A673 (cell line): ENCODE measurements at regions of chrX and their contacts with region 1.

Region 1: GRCh38 chrX:36867143-36867542 is 141.0 kb upstream of the FAM47C start:
- DNase-seq: peak; percentile 82
- H3K4me3 ChIP-seq: no peak overlapping the region
- H3K27ac ChIP-seq: peak overlapping the region; percentile 24
- H3K4me1 ChIP-seq: peaks cover 29% of the 10 kb centered on the region
- H3K27me3 ChIP-seq: no peaks in the 10 kb centered on the region
- CTCF ChIP-seq: peak; percentile 70

Region 2: DNA sequence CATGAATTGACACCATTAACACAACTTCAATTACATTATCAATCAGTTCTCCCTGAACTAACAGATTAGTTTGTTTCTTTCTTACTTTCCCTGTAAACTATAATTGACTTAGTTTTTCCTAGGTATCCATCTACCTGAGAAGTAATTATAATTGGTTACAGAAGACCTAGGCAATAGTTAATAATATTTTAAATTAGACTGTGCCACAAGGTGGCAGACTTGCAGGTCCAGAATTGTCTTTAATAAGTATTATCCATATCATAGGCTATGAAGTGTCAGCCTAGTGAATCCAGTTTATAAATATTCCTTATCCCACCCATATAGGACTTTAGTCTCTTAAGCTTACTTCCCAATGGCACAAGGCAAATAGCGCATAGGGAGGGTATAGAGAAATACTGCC is 1973.4 kb before region 1 on chrX:
- CTCF ChIA-PET with region 1: no interaction called
- POLR2A ChIA-PET with region 1: no interaction called
- intact Hi-C with region 1: loop called (anchors 10 kb)
- DNase-seq: peak; percentile 36
- H3K4me3 ChIP-seq: no peak overlapping the region
- H3K27ac ChIP-seq: no peak overlapping the region
- H3K4me1 ChIP-seq: no peaks in the 10 kb centered on the region
- H3K27me3 ChIP-seq: no peaks in the 10 kb centered on the region
- CTCF ChIP-seq: peak; percentile 66

Region 3: GRCh38 chrX:35380808-35381700 is 1486.1 kb before region 1 on chrX:
- CTCF ChIA-PET with region 1: no interaction called
- POLR2A ChIA-PET with region 1: no interaction called
- intact Hi-C with region 1: loop called (anchors 2 kb)
- DNase-seq: peak; percentile 55
- H3K4me3 ChIP-seq: no peak overlapping the region
- H3K27ac ChIP-seq: no peak overlapping the region
- H3K4me1 ChIP-seq: no peaks in the 10 kb centered on the region
- H3K27me3 ChIP-seq: no peaks in the 10 kb centered on the region
- CTCF ChIP-seq: peak; percentile 82

Region 4: GRCh38 chrX:35890699-35891098 is 976.4 kb before region 1 on chrX:
- CTCF ChIA-PET with region 1: no interaction called
- POLR2A ChIA-PET with region 1: no interaction called
- intact Hi-C with region 1: loop called (anchors 2 kb)
- DNase-seq: peak; percentile 94
- H3K4me3 ChIP-seq: peak overlapping the region; percentile 21
- H3K27ac ChIP-seq: peak overlapping the region; percentile 62
- H3K4me1 ChIP-seq: peaks cover 10% of the 10 kb centered on the region
- H3K27me3 ChIP-seq: no peaks in the 10 kb centered on the region
- CTCF ChIP-seq: peak; percentile 79

Region 5: GRCh38 chrX:36573720-36574119 is 293.4 kb before region 1 on chrX:
- CTCF ChIA-PET with region 1: no interaction called
- POLR2A ChIA-PET with region 1: no interaction called
- intact Hi-C with region 1: loop called (anchors 10 kb)
- DNase-seq: peak; percentile 44
- H3K4me3 ChIP-seq: no peak overlapping the region
- H3K27ac ChIP-seq: no peak overlapping the region
- H3K4me1 ChIP-seq: peaks cover 27% of the 10 kb centered on the region
- H3K27me3 ChIP-seq: no peaks in the 10 kb centered on the region
- CTCF ChIP-seq: no peak

Region 6: GRCh38 chrX:36684053-36684452 is 183.1 kb before region 1 on chrX:
- CTCF ChIA-PET with region 1: no interaction called
- POLR2A ChIA-PET with region 1: no interaction called
- intact Hi-C with region 1: loop called (anchors 5 kb)
- DNase-seq: peak; percentile 18
- H3K4me3 ChIP-seq: no peak overlapping the region
- H3K27ac ChIP-seq: no peak overlapping the region
- H3K4me1 ChIP-seq: no peaks in the 10 kb centered on the region
- H3K27me3 ChIP-seq: no peaks in the 10 kb centered on the region
- CTCF ChIP-seq: peak; percentile 52